ENCODE measurements at regions of chr19 and their contacts with region 1.

Region 1: GRCh38 chr19:10565567-10566407 is at the start of gene KRI1:
- DNase-seq: peak in 1 of 2 donors; percentile 98
- H3K4me3 ChIP-seq: peak within 1 kb of the TSS; percentile 86 to 91
- H3K27ac ChIP-seq: peak within 1 kb of the TSS; percentile 82
- H3K4me1 ChIP-seq: peaks cover 48% of the 10 kb centered on the region
- H3K27me3 ChIP-seq: no peaks in the 10 kb centered on the region
- CTCF ChIP-seq: peak; percentile 12 to 27 (median 20)
- POLR2A ChIP-seq: peak in 1 of 2 donors; percentile 95
- total RNA-seq, gene KRI1: 21.6 TPM

Region 2: GRCh38 chr19:10403137-10404021 is 162.4 kb before region 1 on chr19 and contains the start of gene CDC37:
- intact Hi-C with region 1: loop called (anchors 5 kb)
- DNase-seq: peak in 1 of 2 donors; percentile 95
- H3K4me3 ChIP-seq: peak within 1 kb of the TSS; percentile 90 to 97
- H3K27ac ChIP-seq: peak within 1 kb of the TSS; percentile 67
- H3K4me1 ChIP-seq: peaks cover 53% of the 10 kb centered on the region
- H3K27me3 ChIP-seq: no peaks in the 10 kb centered on the region
- CTCF ChIP-seq: no peak
- POLR2A ChIP-seq: peak in 1 of 2 donors; percentile 77
- total RNA-seq, gene CDC37: 112 TPM

Region 3: GRCh38 chr19:10502524-10503001 is 63.2 kb before region 1 on chr19:
- intact Hi-C with region 1: loop called (anchors 2 kb)
- DNase-seq: peak in 1 of 2 donors; percentile 85
- H3K4me3 ChIP-seq: peak overlapping the region; percentile 76 to 89
- H3K27ac ChIP-seq: peak overlapping the region; percentile 94
- H3K4me1 ChIP-seq: peaks cover 44% of the 10 kb centered on the region
- H3K27me3 ChIP-seq: no peaks in the 10 kb centered on the region
- CTCF ChIP-seq: no peak
- POLR2A ChIP-seq: peak in 1 of 2 donors; percentile 39